ENCODE measurements at regions of chr7 and their contacts with region 1.

Region 1: DNA sequence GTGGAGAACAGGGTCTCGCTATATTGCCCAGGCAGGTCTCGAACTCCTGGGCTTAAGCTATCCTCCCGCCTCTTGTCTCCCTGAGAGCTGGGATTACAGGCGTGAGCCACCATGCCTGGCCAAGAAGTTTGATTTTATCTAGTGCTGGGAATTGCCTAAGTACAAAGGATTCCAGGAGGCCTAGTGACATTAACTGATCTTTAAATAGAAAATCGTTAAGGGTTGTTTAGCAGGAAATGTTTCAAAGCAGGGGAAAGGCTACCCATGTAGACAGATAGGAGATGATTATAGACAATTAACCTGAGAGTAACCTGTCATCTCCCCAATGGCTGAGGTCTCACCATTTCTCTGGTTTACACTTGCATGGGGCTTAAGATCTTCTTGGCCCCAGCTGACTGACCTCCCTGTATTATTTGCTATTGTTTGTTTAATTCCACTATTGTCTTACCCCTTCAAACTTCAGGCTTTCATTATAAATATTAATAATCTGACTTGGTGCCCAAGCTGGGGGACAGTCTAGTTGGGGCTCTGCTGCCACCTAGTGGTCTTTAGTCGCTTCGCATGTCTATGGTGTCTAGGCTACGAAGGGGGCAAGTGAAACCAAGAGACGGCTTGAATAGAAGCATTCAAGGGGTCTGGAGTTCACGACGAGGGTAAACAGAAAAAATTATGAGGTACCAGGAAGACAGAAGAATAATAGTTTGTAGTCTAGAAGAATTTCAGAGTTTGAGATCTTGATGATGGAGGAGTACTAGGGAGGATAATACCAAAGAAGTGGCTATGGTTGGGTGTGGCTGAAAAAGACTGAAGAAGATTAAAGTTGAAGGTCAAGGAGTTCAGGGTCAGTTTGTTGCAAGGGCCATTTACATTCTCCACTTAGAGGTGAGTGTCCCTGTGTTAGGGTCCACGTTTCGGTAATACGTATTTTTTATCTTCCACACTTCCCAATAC is 40.4 kb upstream of the BPGM start:
- DNase-seq: peak; percentile 70 to 92
- H3K4me3 ChIP-seq: no peak overlapping the region
- H3K27ac ChIP-seq: peak overlapping the region; percentile 80
- H3K4me1 ChIP-seq: peaks cover 32% of the 10 kb centered on the region
- H3K27me3 ChIP-seq: no peaks in the 10 kb centered on the region
- CTCF ChIP-seq: peak; percentile 99

Region 2: DNA sequence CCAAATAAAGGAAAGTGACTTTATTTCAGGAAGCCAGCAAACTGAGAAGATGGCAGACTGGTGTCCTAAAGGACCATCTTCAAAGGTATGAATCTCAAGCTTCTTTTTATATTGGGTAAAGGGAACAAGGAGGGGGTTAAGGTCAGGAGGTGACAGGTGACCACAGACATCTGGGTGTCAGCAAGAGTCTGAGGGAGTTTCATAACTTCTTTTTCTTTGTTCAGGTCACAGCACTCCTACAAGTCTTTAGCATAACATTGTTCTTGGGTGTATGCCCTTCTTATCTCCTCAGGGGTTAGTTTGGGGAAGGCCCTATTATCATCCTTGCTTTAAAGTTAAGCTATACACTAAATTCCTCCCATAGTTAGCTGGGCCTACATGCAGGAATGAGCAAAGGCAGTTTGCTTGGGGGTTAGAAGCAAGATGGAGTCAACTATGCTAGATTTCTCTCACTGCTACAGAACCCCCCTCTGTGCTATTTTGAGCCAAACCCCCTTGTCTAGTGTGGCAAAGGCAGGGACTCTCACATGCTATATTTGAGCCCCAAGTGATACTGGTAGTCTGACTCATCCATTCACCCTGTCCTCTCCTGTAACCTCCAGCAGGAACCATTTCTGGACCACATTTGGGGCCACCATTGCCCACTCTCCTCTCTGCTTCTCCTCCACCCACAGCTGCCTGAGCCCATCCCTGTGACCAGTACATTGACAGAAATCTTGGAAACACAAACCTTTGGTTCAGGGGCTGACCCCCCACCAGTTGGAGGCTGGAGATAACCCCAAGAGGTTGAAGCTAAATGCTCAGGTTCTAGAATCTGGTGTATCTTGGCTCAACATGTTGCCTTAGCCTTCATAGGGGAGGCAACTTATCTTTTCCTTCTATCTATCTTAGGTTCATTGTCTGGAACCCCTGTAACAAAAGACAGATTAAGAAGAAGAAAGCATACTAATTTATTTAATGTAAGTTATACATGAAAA is 534.6 kb before region 1 on chr7:
- CTCF ChIA-PET with region 1: no interaction called
- POLR2A ChIA-PET with region 1: no interaction called
- intact Hi-C with region 1: no loop called
- DNase-seq: peak in 1 of 2 experiments; percentile 34
- H3K4me3 ChIP-seq: no peak overlapping the region
- H3K27ac ChIP-seq: no peak overlapping the region
- H3K4me1 ChIP-seq: no peaks in the 10 kb centered on the region
- H3K27me3 ChIP-seq: no peaks in the 10 kb centered on the region
- CTCF ChIP-seq: no peak

Region 3: GRCh38 chr7:134394046-134394445 is 212.2 kb before region 1 on chr7:
- CTCF ChIA-PET with region 1: no interaction called
- POLR2A ChIA-PET with region 1: no interaction called
- intact Hi-C with region 1: no loop called
- DNase-seq: no peak
- H3K4me3 ChIP-seq: no peak overlapping the region
- H3K27ac ChIP-seq: no peak overlapping the region
- H3K4me1 ChIP-seq: no peaks in the 10 kb centered on the region
- H3K27me3 ChIP-seq: no peaks in the 10 kb centered on the region
- CTCF ChIP-seq: no peak

Region 4: GRCh38 chr7:134458806-134459698 is 147.2 kb before region 1 on chr7 and contains the start of gene AKR1B1:
- CTCF ChIA-PET with region 1: no interaction called
- POLR2A ChIA-PET with region 1: no interaction called
- intact Hi-C with region 1: loop called (anchors 2 kb)
- DNase-seq: peak; percentile 88 to 95
- H3K4me3 ChIP-seq: peak within 1 kb of the TSS; percentile 93
- H3K27ac ChIP-seq: peak within 1 kb of the TSS; percentile 97
- H3K4me1 ChIP-seq: peaks cover 74% of the 10 kb centered on the region
- H3K27me3 ChIP-seq: no peaks in the 10 kb centered on the region
- CTCF ChIP-seq: peak; percentile 36; the same call in 1 of the 2 replicates
- total RNA-seq, gene AKR1B1: 1,009 and 1,328 TPM in 2 replicates

Region 5: DNA sequence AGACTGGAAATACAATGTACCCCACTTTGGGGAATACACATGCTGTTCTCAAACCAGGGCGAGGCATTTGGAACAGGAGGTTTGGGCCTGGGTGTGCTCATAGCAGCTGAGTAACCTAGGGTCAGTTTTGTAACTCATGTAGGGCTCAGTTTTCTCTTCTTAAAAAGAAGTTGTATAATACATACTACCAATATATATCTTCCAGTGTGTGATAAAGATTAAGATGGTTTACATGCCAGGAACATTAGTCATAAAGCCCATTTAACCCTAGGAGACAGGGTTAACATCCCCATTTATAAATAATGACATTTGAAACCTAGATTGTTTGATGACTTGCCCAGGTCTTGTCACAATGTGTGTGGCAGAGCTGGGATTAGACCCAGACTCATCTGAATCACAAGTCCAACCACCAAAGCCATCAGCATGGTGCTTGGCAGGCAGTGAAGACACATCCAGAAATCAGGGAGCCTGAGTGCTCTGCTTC is 72.9 kb before region 1 on chr7:
- CTCF ChIA-PET with region 1: interaction called, 3 read pairs
- POLR2A ChIA-PET with region 1: no interaction called
- intact Hi-C with region 1: loop called (anchors 5 kb)
- DNase-seq: peak; percentile 44 to 95
- H3K4me3 ChIP-seq: peak overlapping the region; percentile 87
- H3K27ac ChIP-seq: peak overlapping the region; percentile 96
- H3K4me1 ChIP-seq: peaks cover 56% of the 10 kb centered on the region
- H3K27me3 ChIP-seq: no peaks in the 10 kb centered on the region
- CTCF ChIP-seq: no peak

Region 6: DNA sequence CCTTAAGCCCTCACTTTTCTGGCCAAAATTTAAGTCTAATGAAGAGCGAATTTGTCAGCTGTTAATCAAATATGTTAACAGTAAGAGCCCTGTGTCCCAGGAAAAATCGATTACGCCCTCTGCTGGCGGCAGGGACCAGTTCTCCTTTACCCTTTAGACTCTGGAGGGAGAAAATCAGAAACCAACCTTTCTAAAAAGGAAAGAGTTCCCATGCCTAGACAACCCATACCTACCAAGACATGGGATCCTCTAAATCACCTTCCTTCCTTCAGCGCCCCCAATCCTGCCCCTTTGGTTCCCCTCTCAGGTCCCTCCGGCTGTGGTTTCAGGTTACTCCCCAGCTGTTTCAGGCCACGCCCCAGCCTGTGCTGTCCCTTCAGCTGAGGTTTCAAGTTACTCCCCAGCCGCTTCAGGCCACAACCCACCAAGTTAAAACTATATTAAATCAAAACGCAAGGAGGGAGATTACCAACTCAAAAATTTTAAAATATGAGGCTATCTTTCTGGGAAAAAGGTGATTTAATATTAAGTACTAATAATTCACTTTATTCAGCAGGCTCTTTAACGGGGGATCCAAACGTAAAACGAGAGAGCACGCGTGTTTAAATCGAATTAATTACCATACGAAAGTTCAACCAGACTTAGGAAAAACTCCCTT is 58.7 kb before region 1 on chr7:
- CTCF ChIA-PET with region 1: interaction called, 20 read pairs
- POLR2A ChIA-PET with region 1: no interaction called
- intact Hi-C with region 1: loop called (anchors 1 kb)
- DNase-seq: peak; percentile 75 to 77
- H3K4me3 ChIP-seq: peak overlapping the region; percentile 20; the same call in 1 of the 2 replicates
- H3K27ac ChIP-seq: peak overlapping the region; percentile 84
- H3K4me1 ChIP-seq: peaks cover 42% of the 10 kb centered on the region
- H3K27me3 ChIP-seq: no peaks in the 10 kb centered on the region
- CTCF ChIP-seq: peak; percentile 97

Region 7: DNA sequence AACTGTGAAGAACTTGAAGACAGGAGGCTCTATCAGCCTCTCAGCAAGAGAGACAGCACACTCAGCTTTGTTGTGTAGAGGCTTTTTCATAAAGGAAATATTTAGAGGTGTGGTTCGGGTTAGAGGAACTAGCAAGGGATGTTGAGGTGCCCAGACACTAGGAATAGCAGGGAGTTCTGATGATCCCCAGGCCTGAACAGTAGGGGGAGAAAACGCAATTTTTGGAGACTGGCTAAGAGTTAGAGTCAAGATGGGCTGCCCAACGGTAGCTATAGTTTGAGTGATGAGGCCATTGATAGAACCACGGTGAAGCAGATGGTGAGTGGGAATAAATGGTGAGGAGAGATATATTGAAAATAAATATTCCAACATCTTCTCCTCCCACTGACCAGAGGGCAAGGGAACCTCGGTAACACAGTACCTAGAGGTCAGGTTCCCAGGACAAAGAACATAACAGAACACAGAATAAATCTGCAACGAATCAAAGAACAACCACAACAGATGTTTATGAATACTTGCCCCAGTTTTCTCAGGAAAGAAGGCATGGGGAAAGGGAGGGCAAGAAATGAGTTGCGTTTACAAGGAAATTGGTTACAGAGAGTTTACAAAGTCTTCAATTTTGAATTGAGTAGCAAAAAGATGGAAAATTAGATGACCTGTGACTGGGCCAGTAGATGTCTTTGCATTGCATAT is 16.2 kb after region 1 on chr7:
- CTCF ChIA-PET with region 1: interaction called, 21 read pairs
- POLR2A ChIA-PET with region 1: no interaction called
- intact Hi-C with region 1: no loop called
- DNase-seq: no peak
- H3K4me3 ChIP-seq: no peak overlapping the region
- H3K27ac ChIP-seq: no peak overlapping the region
- H3K4me1 ChIP-seq: no peaks in the 10 kb centered on the region; the same call in 1 of the 2 replicates
- H3K27me3 ChIP-seq: no peaks in the 10 kb centered on the region
- CTCF ChIP-seq: no peak

Measured in PC-9 (cell line).